ENCODE measurements at regions of chr20 and their contacts with region 1.

Region 1: DNA sequence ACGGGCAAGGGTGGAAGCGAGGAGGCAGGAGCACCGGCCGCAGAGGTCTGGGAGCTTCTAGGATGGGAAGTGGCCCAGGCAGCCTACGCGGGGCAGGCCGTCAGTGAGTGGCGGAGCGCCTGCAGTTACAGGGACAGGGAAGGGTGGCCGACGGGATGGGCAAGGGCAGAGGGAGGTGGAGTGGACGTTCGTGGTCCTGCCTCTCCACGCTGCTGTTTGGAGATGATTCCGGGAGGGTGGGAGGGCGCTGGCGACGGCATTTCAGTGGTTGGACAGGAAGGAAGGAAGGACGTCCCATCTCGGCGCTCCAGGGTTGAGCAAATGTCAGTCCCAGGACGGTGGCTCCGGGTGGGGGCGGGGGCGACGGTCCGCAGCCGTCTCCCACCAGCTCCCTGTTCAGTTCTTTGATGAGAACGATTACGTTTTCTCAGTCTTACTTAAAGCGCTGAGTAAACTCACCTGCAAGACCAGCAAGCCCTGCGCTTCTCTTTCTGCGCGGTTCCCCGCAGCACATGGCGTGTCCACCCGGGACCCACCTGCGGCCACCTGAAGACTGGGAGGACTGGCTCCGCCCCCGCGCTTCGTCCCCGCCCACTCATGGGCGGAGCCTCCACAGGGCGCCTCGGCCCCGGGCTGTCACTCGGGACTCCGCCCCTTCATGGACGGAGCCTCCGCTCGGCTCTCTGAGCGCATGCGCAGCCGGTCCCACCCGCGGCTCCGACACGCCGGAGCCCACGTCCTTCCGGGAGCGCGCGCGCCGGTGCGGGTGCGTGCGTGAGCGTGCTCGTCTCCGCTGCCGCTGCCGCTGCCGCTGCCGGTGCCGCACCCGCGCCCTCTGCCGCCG is at the start of gene DNAJC5:
- DNase-seq: peak; percentile 91
- H3K4me3 ChIP-seq: peak within 1 kb of the TSS; percentile 67 to 98 (median 86)
- H3K27ac ChIP-seq: peak within 1 kb of the TSS; percentile 66
- H3K4me1 ChIP-seq: peaks cover 14% of the 10 kb centered on the region
- H3K27me3 ChIP-seq: no peaks in the 10 kb centered on the region
- CTCF ChIP-seq: no peak
- POLR2A ChIP-seq: no peak
- total RNA-seq, gene DNAJC5: 58.7 and 60.3 TPM in 2 replicates

Region 2: GRCh38 chr20:62984666-62985443 is 909.7 kb before region 1 on chr20:
- CTCF ChIA-PET with region 1: no interaction called
- POLR2A ChIA-PET with region 1: interaction called, 10 read pairs
- dilution Hi-C with region 1: no loop called
- intact Hi-C with region 1: no loop called
- DNase-seq: no peak
- H3K4me3 ChIP-seq: no peak overlapping the region
- H3K27ac ChIP-seq: no peak overlapping the region
- H3K4me1 ChIP-seq: no peaks in the 10 kb centered on the region
- H3K27me3 ChIP-seq: peaks cover 11% of the 10 kb centered on the region in 2 experiments
- CTCF ChIP-seq: no peak
- POLR2A ChIP-seq: no peak

Region 3: DNA sequence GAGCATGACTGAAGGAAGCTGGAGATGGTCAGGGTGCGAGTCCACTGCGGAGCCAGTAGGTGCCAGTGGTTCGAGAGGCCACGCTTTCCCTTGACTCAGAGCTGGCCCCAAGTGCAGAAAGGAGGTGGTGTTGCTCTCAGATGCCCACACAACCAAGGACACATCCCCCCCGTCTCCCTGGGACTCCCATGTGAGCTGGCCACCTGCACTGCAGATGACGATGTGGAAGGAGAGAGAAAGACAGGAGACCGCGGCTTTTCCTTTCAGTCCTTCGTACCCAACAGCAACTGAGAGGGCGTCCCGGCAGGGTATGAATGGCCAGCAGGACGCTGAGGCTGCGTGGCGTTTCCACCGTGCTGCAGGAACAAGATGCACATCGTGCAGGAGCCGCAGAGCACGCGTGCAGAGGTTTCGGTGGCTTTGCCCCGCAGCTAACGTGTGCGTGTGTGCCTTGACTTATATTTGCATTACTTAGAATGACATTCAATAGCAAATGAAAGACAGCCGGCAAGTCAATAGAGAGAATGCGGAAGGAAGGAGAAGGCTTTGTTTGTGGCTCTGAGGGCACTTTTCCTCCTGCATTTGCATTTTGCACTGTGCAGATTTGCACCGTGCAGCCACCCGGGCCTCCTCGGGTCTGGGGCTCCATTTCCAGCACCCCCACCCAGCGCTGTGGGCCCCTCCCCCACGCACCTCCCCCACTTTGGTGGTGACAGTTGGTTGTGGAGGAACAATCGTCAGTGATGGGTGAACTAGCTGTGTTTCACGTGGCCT is 861.5 kb before region 1 on chr20:
- CTCF ChIA-PET with region 1: no interaction called
- POLR2A ChIA-PET with region 1: no interaction called
- dilution Hi-C with region 1: no loop called
- intact Hi-C with region 1: no loop called
- DNase-seq: no peak
- H3K4me3 ChIP-seq: no peak overlapping the region
- H3K27ac ChIP-seq: no peak overlapping the region
- H3K4me1 ChIP-seq: no peaks in the 10 kb centered on the region
- H3K27me3 ChIP-seq: peaks cover 25 to 37% of the 10 kb centered on the region in 2 experiments
- CTCF ChIP-seq: no peak
- POLR2A ChIP-seq: no peak

Region 4: GRCh38 chr20:63767456-63767855 is 127.1 kb before region 1 on chr20:
- CTCF ChIA-PET with region 1: no interaction called
- POLR2A ChIA-PET with region 1: no interaction called
- dilution Hi-C with region 1: no loop called
- intact Hi-C with region 1: no loop called
- DNase-seq: no peak
- H3K4me3 ChIP-seq: no peak overlapping the region
- H3K27ac ChIP-seq: no peak overlapping the region
- H3K4me1 ChIP-seq: no peaks in the 10 kb centered on the region
- H3K27me3 ChIP-seq: no peaks in the 10 kb centered on the region
- CTCF ChIP-seq: no peak
- POLR2A ChIP-seq: no peak

Region 5: DNA sequence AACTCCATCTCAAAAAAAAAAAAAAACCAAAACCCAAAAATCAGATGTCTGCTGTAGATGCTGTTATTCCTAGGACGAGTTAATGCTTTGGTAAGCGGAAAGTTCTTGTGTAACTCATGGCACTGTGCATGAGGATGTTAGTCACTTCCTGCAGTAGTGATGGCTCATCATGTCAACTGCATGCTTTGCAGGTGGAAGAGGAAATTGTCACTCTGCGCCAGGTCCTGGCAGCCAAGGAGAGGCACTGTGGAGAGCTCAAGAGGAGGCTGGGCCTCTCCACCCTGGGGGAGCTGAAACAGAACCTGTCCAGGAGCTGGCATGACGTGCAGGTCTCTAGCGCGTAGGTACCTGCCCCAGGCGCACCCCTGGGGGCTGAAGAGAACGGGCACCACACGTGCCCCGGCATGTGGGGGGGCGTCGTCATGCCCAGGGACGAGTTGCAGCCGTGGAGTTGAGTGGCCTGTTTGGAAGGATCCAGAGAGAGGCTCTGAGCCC is 21.1 kb before region 1 on chr20:
- CTCF ChIA-PET with region 1: interaction called, 5 read pairs
- POLR2A ChIA-PET with region 1: no interaction called
- dilution Hi-C with region 1: no loop called
- intact Hi-C with region 1: loop called (anchors 1 kb)
- DNase-seq: peak; percentile 87
- H3K4me3 ChIP-seq: peak overlapping the region in 1 of 3 experiments; percentile 12
- H3K27ac ChIP-seq: peak overlapping the region; percentile 89
- H3K4me1 ChIP-seq: peaks cover 14% of the 10 kb centered on the region
- H3K27me3 ChIP-seq: no peaks in the 10 kb centered on the region
- CTCF ChIP-seq: no peak
- POLR2A ChIP-seq: no peak

Measured in endothelial cell of umbilical vein (primary cell).